ENCODE measurements at regions of chr5 and their contacts with region 1.

Region 1: DNA sequence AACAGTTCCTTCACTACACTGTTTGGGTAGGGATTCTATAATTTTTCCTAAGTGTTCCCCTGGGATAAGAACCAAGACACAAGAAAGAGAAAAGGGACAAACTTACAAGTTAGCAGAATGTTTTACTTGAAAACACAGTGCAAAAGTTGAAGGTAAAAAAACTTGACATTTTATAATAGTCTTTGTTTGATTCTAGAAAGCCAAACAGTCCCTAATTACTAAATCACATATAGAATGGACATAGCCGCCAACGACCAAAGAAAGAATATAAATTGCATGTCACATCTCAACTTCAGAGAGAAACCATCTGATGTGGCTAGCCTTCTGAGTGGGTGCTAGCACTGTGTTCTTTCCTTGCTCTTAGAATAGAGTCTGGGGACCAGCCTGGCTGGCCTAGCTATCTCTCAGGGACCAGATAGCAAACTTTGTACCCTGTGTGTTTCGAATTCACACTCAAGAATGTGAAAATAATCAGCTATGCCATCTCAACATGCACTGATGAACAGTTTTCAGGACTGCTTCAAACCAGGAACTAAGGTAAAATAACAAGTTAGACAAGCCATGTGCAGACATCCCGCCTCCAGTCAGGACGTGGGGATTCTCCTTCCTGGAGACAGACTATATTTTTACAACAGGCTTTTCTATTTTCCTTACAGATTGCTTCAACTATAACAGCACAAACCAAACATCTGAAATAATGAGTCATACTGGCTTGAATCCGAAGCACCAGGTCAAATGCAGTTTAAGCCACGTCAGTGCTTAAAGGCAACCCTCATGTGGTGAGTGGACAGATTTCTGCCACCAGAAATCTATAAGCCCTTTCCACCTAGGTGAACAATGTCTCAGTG is 53.7 kb downstream of the LHFPL2 start:
- DNase-seq: peak; percentile 55 to 83
- H3K4me3 ChIP-seq: no peak overlapping the region
- H3K27ac ChIP-seq: peak overlapping the region; percentile 89 to 94
- H3K4me1 ChIP-seq: peaks cover 0 to 30% of the 10 kb centered on the region in 2 donors
- H3K27me3 ChIP-seq: no peaks in the 10 kb centered on the region
- CTCF ChIP-seq: peak in 1 of 3 donors; percentile 43
- POLR2A ChIP-seq: no peak

Region 2: DNA sequence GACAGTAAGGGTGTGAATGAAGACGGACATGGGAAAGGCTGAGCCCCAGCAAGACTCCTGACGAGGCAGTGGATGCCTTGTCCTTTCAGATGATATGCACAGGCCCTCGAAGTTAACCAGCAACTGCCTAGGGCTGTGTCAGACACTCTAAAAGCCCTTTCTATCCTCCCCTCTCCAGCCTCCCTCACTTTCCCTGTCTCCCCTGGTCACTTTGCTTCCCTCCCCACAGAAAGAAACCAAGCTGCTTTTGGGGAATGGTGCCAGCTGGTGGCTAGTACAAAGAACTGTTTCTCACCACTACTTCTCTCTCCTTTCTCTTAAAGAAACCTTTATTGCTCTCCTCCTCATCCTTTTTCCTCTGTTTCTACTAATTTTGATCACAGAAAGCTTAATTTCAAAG is 32.3 kb after region 1 on chr5:
- intact Hi-C with region 1: no loop called
- DNase-seq: no peak
- H3K4me3 ChIP-seq: no peak overlapping the region
- H3K27ac ChIP-seq: peak overlapping the region; percentile 50 to 67
- H3K4me1 ChIP-seq: no peaks in the 10 kb centered on the region
- H3K27me3 ChIP-seq: no peaks in the 10 kb centered on the region
- CTCF ChIP-seq: no peak
- POLR2A ChIP-seq: no peak

Region 3: GRCh38 chr5:78889369-78890140 is 294.7 kb after region 1 on chr5:
- intact Hi-C with region 1: loop called (anchors 5 kb)
- DNase-seq: no peak
- H3K4me3 ChIP-seq: no peak overlapping the region
- H3K27ac ChIP-seq: no peak overlapping the region
- H3K4me1 ChIP-seq: no peaks in the 10 kb centered on the region
- H3K27me3 ChIP-seq: no peaks in the 10 kb centered on the region
- CTCF ChIP-seq: no peak
- POLR2A ChIP-seq: no peak